ENCODE measurements at regions of chr7 and their contacts with region 1.

Region 1: DNA sequence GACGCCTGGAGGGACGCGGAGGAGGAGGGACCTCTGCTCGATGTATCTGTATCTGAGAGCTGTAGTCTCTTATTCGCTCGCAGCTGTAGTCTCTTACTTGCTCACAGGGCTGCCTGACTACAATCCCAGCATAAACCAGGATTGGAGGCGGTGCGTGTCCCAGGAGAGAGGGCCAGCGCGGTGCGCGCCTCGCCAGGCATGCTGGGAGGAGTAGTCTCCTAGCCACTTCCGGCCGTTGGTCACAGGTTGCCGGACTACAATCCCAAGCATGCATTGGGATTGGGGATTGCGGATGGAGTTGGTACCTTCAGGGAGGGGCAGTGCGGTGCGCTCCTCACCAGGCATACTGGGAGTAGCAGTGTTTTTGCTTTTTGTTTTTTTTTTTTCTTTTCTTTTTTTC is 421.7 kb upstream of the NUPR2 start:
- DNase-seq: peak in 1 of 2 donors; percentile 21
- H3K4me3 ChIP-seq: peak overlapping the region in 1 of 3 donors; percentile 39
- H3K27ac ChIP-seq: no peak overlapping the region
- H3K4me1 ChIP-seq: no peaks in the 10 kb centered on the region
- H3K27me3 ChIP-seq: no peaks in the 10 kb centered on the region
- CTCF ChIP-seq: no peak
- POLR2A ChIP-seq: no peak

Region 2: GRCh38 chr7:54904130-54904529 is 1633.8 kb before region 1 on chr7:
- intact Hi-C with region 1: loop called (anchors 10 kb)
- DNase-seq: no peak
- H3K4me3 ChIP-seq: no peak overlapping the region
- H3K27ac ChIP-seq: peak overlapping the region in 1 of 2 donors; percentile 17
- H3K4me1 ChIP-seq: no peaks in the 10 kb centered on the region
- H3K27me3 ChIP-seq: no peaks in the 10 kb centered on the region
- CTCF ChIP-seq: no peak
- POLR2A ChIP-seq: no peak

Region 3: DNA sequence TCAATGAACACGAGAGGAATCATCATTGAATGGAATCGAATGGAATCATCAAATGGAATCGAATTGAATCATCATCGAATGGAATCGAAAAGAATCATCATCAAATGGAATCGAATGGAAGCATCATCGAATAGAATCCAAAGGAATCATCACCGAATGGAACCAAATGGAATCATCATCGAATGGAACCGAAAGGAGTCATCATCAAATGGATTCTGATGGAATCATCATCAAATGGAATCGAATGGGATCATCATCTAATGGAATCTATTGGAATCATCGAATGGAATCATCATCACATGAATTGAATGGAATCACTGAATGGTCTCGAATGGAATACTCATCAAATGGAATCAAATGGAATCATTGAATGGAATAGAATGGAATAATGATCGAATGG is 1500.4 kb after region 1 on chr7:
- intact Hi-C with region 1: loop called (anchors 10 kb)
- DNase-seq: no peak
- H3K4me3 ChIP-seq: no peak overlapping the region
- H3K27ac ChIP-seq: no peak overlapping the region
- H3K4me1 ChIP-seq: no peaks in the 10 kb centered on the region
- H3K27me3 ChIP-seq: no peaks in the 10 kb centered on the region
- CTCF ChIP-seq: no peak
- POLR2A ChIP-seq: no peak

Measured in breast epithelium (tissue), 4 donors.